Activated naive CD4-positive, alpha-beta T cell treated with anti-CD3 and anti-CD28 coated beads for 36 hours (primary cell): ENCODE measurements at regions of chr12 and their contacts with region 1.

Region 1: DNA sequence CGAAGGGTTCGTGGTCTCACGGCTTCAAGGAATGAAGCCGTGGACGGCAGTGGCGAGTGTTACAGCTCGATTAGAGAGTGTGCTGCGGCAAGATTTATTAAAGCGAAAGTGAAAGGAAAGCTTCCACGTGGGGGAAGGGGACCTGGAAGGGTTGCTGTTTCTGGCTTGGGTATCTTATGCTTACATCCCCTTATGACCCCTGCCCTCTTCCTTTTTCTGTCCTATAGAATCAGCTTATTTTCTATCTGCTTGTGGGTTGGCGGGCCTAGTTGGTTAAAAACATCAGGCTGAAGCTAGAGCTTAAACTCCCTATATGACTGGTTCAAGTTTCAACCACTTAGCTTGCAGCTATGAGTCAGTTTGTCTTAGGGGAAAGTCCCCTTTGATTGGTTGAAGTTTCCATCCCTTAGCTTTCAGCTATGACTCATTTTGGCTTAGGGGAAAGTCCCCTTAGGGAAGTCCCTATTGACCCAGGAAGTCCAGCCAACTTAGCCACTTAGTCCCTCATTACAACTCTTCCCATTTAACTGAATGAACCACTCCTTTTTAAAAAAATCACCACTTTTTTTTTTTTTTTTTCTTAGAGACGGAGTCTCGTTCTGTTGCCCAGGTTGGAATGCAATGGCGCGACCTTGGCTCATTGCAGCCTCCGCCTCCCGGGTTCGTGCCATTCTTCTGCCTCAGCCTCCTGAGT is 1494.7 kb upstream of the TMEM132C start:
- DNase-seq: peak; percentile 37
- H3K4me3 Mint-ChIP-seq: peak overlapping the region; percentile 62
- H3K27ac Mint-ChIP-seq: peak overlapping the region; percentile 83
- H3K4me1 Mint-ChIP-seq: peaks cover 19% of the 10 kb centered on the region
- H3K27me3 Mint-ChIP-seq: peaks cover 5% of the 10 kb centered on the region

Region 2: DNA sequence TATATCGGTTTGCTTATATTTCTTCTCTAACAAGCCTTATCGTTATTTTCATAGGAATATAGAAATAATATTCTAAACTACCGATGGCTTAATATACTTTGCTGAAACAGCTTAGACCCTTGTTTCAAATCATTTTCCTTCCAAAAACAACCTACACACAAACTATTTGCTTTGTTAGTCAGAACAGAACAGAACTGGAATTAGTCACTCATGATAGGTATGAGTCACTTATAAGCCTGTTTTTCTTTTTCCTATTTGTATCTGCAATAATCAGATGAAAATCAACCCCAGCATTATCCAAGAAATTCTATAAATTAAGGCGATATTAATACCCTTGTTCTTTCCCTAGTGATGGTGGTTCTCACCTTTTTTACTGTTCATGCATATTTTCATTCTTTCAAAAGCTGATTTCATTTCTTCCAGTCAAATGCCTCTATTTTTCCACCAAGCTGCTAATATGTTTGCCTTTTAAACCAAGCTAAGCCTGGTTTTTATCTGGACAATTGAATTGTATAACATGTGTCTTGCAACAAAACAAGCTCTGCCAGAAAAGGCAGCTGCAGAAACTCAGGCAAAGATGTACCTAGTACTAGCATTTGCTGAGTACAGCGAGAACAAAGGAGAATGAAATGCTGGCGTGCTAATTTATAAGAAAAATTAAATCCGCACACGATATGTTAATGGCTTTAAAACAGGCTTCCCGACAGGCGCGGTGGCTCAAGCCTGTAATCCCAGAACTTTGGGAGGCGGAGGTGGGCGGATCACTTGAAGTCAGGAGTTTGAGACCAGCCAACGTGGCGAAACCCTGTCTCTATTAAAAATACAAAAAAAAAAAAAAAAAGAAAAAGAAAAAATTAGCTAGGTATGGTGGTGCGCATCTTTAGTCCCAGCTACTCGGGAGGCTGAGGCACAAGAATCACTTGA is 288.9 kb before region 1 on chr12:
- CTCF ChIA-PET with region 1: no interaction called
- intact Hi-C with region 1: loop called (anchors 5 kb)
- DNase-seq: no peak
- H3K4me3 Mint-ChIP-seq: no peak overlapping the region
- H3K27ac Mint-ChIP-seq: no peak overlapping the region
- H3K4me1 Mint-ChIP-seq: peaks cover 6% of the 10 kb centered on the region
- H3K27me3 Mint-ChIP-seq: no peaks in the 10 kb centered on the region

Region 3: GRCh38 chr12:126648074-126648473 is 124.2 kb before region 1 on chr12:
- CTCF ChIA-PET with region 1: no interaction called
- intact Hi-C with region 1: no loop called
- DNase-seq: no peak
- H3K4me3 Mint-ChIP-seq: no peak overlapping the region
- H3K27ac Mint-ChIP-seq: no peak overlapping the region
- H3K4me1 Mint-ChIP-seq: no peaks in the 10 kb centered on the region
- H3K27me3 Mint-ChIP-seq: no peaks in the 10 kb centered on the region

Region 4: GRCh38 chr12:126708492-126708896 is 63.8 kb before region 1 on chr12:
- CTCF ChIA-PET with region 1: no interaction called
- intact Hi-C with region 1: loop called (anchors 1 kb)
- DNase-seq: peak; percentile 5
- H3K4me3 Mint-ChIP-seq: no peak overlapping the region
- H3K27ac Mint-ChIP-seq: no peak overlapping the region
- H3K4me1 Mint-ChIP-seq: peaks cover 2% of the 10 kb centered on the region
- H3K27me3 Mint-ChIP-seq: peaks cover 3% of the 10 kb centered on the region

Region 5: GRCh38 chr12:127125607-127126259 is 353.4 kb after region 1 on chr12:
- CTCF ChIA-PET with region 1: no interaction called
- intact Hi-C with region 1: loop called (anchors 2 kb)
- DNase-seq: peak; percentile 75
- H3K4me3 Mint-ChIP-seq: no peak overlapping the region
- H3K27ac Mint-ChIP-seq: peak overlapping the region; percentile 36
- H3K4me1 Mint-ChIP-seq: peaks cover 13% of the 10 kb centered on the region
- H3K27me3 Mint-ChIP-seq: peaks cover 22% of the 10 kb centered on the region